Activated CD4-positive, alpha-beta T cell treated with anti-CD3 and anti-CD28 coated beads, Interleukin-2, amount 10 ng/mL, durations not matched to agents 24 days and 14 days (primary cell): ENCODE measurements at regions of chr14 and their contacts with region 1.

Region 1: DNA sequence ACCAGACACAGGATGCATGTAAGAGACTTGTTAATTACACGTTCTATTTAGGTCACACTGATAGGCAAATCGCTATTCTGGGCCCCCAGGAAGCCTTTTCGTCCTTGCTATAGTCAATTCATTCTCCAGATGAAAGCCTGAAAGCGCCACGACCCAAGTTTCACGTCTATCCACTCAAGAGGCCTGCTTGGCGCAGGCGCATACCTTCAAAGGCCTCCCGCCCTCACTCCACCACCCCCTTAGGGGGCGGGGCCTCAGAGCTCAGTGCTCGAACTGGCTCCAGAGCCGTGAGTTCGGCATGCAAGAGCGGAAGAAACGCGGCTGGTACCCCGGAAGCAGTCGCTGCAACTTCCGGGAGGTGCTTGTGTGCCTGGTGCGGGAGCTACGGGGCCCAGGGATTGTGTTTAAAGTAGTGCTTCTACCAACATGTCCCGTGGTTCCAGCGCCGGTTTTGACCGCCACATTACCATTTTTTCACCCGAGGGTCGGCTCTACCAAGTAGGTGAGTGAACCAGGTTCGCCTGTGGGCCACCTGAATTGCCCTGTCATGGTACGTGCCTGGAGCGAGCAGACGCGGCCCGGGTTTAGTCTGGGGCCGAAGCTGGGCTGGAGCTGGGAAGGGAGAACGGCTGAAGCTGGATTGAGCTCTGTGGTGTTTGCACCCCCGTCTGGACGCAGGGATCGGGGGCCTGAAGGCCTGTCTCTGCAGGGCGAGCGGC is at the start of gene PSMA6:
- DNase-seq: peak; percentile 100
- H3K4me3 Mint-ChIP-seq: peak within 1 kb of the TSS; percentile 100
- H3K27ac Mint-ChIP-seq: peak within 1 kb of the TSS; percentile 98
- H3K4me1 Mint-ChIP-seq: peaks cover 49% of the 10 kb centered on the region
- H3K27me3 Mint-ChIP-seq: no peaks in the 10 kb centered on the region
- total RNA-seq, gene PSMA6: 501 and 522 TPM in 2 replicates

Region 2: GRCh38 chr14:35046048-35046741 is 246.0 kb before region 1 on chr14 and contains the start of gene FAM177A1:
- intact Hi-C with region 1: loop called (anchors 5 kb)
- DNase-seq: peak; percentile 99
- H3K4me3 Mint-ChIP-seq: peak within 1 kb of the TSS; percentile 96
- H3K27ac Mint-ChIP-seq: peak within 1 kb of the TSS; percentile 99
- H3K4me1 Mint-ChIP-seq: peaks cover 28% of the 10 kb centered on the region
- H3K27me3 Mint-ChIP-seq: no peaks in the 10 kb centered on the region
- total RNA-seq, gene FAM177A1: 37.9 and 41.6 TPM in 2 replicates

Region 3: DNA sequence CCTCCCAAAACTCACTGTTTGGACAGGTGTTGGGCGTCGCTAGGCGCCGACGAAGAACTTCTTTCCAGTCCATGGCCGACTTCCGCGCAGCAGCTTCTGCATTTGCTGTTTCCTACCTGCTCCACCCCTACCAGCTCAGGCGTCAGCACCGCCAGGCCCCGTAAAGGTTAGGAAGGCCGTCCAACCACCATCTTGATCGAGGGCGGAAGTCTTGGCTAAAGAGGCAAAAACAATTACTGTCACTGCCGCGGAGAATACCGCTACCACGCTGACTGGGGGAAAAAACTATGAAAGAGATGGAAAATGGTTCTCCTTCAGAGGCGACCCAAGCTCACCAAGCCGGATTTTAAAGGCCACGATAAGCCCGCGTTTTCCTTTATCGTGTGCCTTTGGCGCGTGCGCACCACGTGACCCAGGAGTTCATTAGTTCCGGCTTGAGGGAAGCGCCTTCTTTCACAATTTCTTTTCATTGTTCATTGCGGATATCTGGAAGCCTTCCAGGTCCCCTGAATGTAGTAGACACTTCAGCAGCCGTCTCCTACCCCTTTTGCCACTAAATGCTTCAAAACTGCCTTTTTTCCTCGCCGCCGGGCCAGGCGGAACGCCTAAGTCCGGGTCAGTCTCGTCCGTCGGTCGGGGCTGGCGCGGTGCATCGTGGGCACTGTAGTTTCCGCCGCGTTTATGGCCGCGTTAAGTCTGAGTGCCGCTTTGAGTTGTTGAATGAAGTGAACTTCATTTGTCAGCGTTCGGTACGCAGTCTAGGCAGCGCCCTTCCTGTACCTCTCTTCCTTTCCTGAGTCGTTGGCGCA is 170.1 kb before region 1 on chr14 and contains the starts of genes PPP2R3C and PRORP:
- intact Hi-C with region 1: loop called (anchors 2 kb)
- DNase-seq: peak; percentile 97
- H3K4me3 Mint-ChIP-seq: peak within 1 kb of the TSS; percentile 82
- H3K27ac Mint-ChIP-seq: peak within 1 kb of the TSS; percentile 100
- H3K4me1 Mint-ChIP-seq: peaks cover 56% of the 10 kb centered on the region
- H3K27me3 Mint-ChIP-seq: no peaks in the 10 kb centered on the region
- total RNA-seq, gene PPP2R3C: 51.6 and 58.1 TPM in 2 replicates
- total RNA-seq, gene PRORP: 35.6 and 41.1 TPM in 2 replicates

Region 4: GRCh38 chr14:35229495-35230089 is 62.6 kb before region 1 on chr14:
- intact Hi-C with region 1: loop called (anchors 2 kb)
- DNase-seq: no peak
- H3K4me3 Mint-ChIP-seq: no peak overlapping the region
- H3K27ac Mint-ChIP-seq: peak overlapping the region; percentile 21
- H3K4me1 Mint-ChIP-seq: peaks cover 18% of the 10 kb centered on the region
- H3K27me3 Mint-ChIP-seq: no peaks in the 10 kb centered on the region

Region 5: GRCh38 chr14:35261774-35262173 is 30.4 kb before region 1 on chr14:
- intact Hi-C with region 1: no loop called
- DNase-seq: no peak
- H3K4me3 Mint-ChIP-seq: no peak overlapping the region
- H3K27ac Mint-ChIP-seq: no peak overlapping the region
- H3K4me1 Mint-ChIP-seq: peaks cover 4% of the 10 kb centered on the region
- H3K27me3 Mint-ChIP-seq: no peaks in the 10 kb centered on the region

Region 6: GRCh38 chr14:35355981-35356841 is 64.0 kb after region 1 on chr14:
- intact Hi-C with region 1: loop called (anchors 1 kb)
- DNase-seq: peak; percentile 64
- H3K4me3 Mint-ChIP-seq: peak overlapping the region; percentile 9
- H3K27ac Mint-ChIP-seq: peak overlapping the region; percentile 87
- H3K4me1 Mint-ChIP-seq: peaks cover 26% of the 10 kb centered on the region
- H3K27me3 Mint-ChIP-seq: no peaks in the 10 kb centered on the region